ENCODE measurements at regions of chr5 and their contacts with region 1.

Region 1: GRCh38 chr5:103942587-103943186 is 380.1 kb upstream of the NUDT12 start:
- DNase-seq: no peak
- H3K4me3 Mint-ChIP-seq: no peak overlapping the region
- H3K27ac Mint-ChIP-seq: no peak overlapping the region
- H3K4me1 Mint-ChIP-seq: no peaks in the 10 kb centered on the region
- H3K27me3 Mint-ChIP-seq: no peaks in the 10 kb centered on the region
- CTCF ChIP-seq: no peak

Region 2: GRCh38 chr5:104062600-104063377 is 120.1 kb after region 1 on chr5:
- CTCF ChIA-PET with region 1: no interaction called
- intact Hi-C with region 1: loop called (anchors 5 kb)
- DNase-seq: peak; percentile 63
- H3K4me3 Mint-ChIP-seq: peak overlapping the region; percentile 62
- H3K27ac Mint-ChIP-seq: peak overlapping the region; percentile 75
- H3K4me1 Mint-ChIP-seq: peaks cover 13% of the 10 kb centered on the region
- H3K27me3 Mint-ChIP-seq: no peaks in the 10 kb centered on the region
- CTCF ChIP-seq: no peak

Region 3: GRCh38 chr5:104178829-104179456 is 236.3 kb after region 1 on chr5:
- CTCF ChIA-PET with region 1: interaction called, 4 read pairs
- intact Hi-C with region 1: loop called (anchors 5 kb)
- DNase-seq: peak; percentile 70
- H3K4me3 Mint-ChIP-seq: no peak overlapping the region
- H3K27ac Mint-ChIP-seq: no peak overlapping the region
- H3K4me1 Mint-ChIP-seq: no peaks in the 10 kb centered on the region
- H3K27me3 Mint-ChIP-seq: no peaks in the 10 kb centered on the region
- CTCF ChIP-seq: peak; percentile 81

Region 4: DNA sequence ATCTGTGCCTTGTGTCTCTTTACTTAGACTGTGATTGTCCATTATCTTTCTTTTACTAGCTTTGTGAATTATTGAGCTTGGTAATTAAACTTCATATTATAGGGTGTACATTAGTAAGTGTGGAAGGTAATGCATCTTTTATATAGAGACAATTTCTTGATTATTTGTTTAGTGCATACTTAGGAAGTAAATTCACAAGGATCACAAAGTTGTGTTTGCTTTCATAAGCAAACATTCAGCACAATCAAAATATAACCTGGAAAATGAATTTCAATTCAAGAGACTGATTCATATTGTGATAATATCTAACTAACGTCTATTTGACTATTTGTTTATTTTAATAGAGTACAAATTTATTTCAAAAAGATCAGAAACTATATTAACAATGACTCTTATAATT is 369.8 kb after region 1 on chr5:
- CTCF ChIA-PET with region 1: no interaction called
- intact Hi-C with region 1: no loop called
- DNase-seq: no peak
- H3K4me3 Mint-ChIP-seq: no peak overlapping the region
- H3K27ac Mint-ChIP-seq: no peak overlapping the region
- H3K4me1 Mint-ChIP-seq: no peaks in the 10 kb centered on the region
- H3K27me3 Mint-ChIP-seq: no peaks in the 10 kb centered on the region
- CTCF ChIP-seq: no peak

Region 5: DNA sequence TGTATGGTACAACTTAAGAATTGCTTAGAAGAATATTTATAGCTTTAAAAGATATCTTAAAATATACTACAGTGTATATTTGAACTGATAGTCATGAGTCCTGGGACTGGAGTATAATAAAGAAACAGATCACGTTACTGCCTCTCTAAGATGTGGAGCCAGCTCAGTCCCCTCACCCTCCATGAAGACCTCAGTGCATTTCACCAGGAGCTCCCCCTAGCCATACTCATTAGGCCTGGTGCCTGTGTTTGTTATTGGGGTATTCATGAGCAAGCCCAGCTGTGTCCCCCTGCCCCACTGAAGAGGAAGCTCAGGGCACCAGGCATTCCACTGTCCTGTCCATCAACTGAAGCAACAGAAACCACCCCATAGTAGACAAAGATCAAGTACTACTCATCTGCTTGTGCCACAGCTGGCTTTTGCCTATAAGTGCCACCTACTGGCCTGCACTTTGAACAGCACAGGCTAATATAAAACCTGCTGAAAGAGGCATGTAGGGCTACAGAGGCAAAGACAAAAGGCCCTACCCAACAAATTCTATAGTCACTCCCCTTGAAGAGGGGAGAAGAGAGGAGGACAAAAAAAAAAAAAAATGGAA is 470.1 kb after region 1 on chr5:
- CTCF ChIA-PET with region 1: no interaction called
- intact Hi-C with region 1: loop called (anchors 10 kb)
- DNase-seq: peak; percentile 38
- H3K4me3 Mint-ChIP-seq: no peak overlapping the region
- H3K27ac Mint-ChIP-seq: no peak overlapping the region
- H3K4me1 Mint-ChIP-seq: no peaks in the 10 kb centered on the region
- H3K27me3 Mint-ChIP-seq: no peaks in the 10 kb centered on the region
- CTCF ChIP-seq: peak; percentile 72

Measured in Calu3 (cell line).